ENCODE measurements at regions of chr9 and their contacts with region 1.

Region 1: GRCh38 chr9:6353851-6354686 is 25.9 kb downstream of the TPD52L3 start:
- DNase-seq: peak in 8 of 9 donors; percentile 22 to 69 (median 58)
- ATAC-seq: peak; percentile 92
- H3K4me3 ChIP-seq: no peak overlapping the region
- H3K4me3 Mint-ChIP-seq: no peak overlapping the region
- H3K27ac ChIP-seq: no peak overlapping the region
- H3K27ac Mint-ChIP-seq: no peak overlapping the region
- H3K4me1 ChIP-seq: no peaks in the 10 kb centered on the region
- H3K4me1 Mint-ChIP-seq: peaks cover 0 to 16% (median 0%) of the 10 kb centered on the region in 7 donors
- H3K27me3 ChIP-seq: no peaks in the 10 kb centered on the region
- H3K27me3 Mint-ChIP-seq: peaks cover 5 to 19% (median 9%) of the 10 kb centered on the region in 5 donors

Region 2: GRCh38 chr9:6488395-6488794 is 134.3 kb after region 1 on chr9:
- CTCF ChIA-PET with region 1: no interaction called
- POLR2A ChIA-PET with region 1: no interaction called
- intact Hi-C with region 1: loop called (anchors 2 to 10 kb)
- DNase-seq: peak in 1 of 9 donors; percentile 0
- ATAC-seq: no peak
- H3K4me3 ChIP-seq: no peak overlapping the region
- H3K4me3 Mint-ChIP-seq: no peak overlapping the region
- H3K27ac ChIP-seq: no peak overlapping the region
- H3K27ac Mint-ChIP-seq: no peak overlapping the region
- H3K4me1 ChIP-seq: no peaks in the 10 kb centered on the region
- H3K4me1 Mint-ChIP-seq: peaks cover 0 to 17% (median 6%) of the 10 kb centered on the region in 7 donors
- H3K27me3 ChIP-seq: no peaks in the 10 kb centered on the region
- H3K27me3 Mint-ChIP-seq: no peaks in the 10 kb centered on the region

Region 3: DNA sequence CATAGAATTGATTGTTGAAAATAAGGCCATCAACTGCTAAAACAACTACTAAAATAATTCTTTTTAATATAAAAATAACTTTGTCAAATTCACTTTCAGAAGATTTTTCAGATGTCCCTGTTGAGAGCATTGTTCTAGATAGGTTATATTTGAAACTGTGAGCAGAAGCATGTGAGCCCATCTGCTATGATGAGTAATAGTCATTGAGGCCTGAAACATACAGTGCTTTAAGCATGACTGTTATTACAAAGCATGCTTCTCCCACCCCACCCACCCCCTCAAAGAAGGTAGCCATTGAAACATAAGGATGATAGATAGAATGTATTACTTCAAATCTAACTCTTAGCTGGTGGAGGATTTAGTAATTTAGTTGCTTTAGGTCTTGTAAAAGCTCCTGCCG is 144.9 kb after region 1 on chr9:
- CTCF ChIA-PET with region 1: no interaction called
- POLR2A ChIA-PET with region 1: no interaction called
- intact Hi-C with region 1: loop called in 1 of 2 experiments (anchors 10 kb)
- DNase-seq: no peak
- ATAC-seq: no peak
- H3K4me3 ChIP-seq: no peak overlapping the region
- H3K4me3 Mint-ChIP-seq: no peak overlapping the region
- H3K27ac ChIP-seq: no peak overlapping the region
- H3K27ac Mint-ChIP-seq: peak overlapping the region in 6 of 9 donors; percentile 9 to 72 (median 44)
- H3K4me1 ChIP-seq: no peaks in the 10 kb centered on the region
- H3K4me1 Mint-ChIP-seq: peaks cover 0 to 3% (median 0%) of the 10 kb centered on the region in 7 donors
- H3K27me3 ChIP-seq: no peaks in the 10 kb centered on the region
- H3K27me3 Mint-ChIP-seq: no peaks in the 10 kb centered on the region

Region 4: GRCh38 chr9:6566409-6567139 is 212.5 kb after region 1 on chr9:
- CTCF ChIA-PET with region 1: interaction called, 88 read pairs
- POLR2A ChIA-PET with region 1: no interaction called
- intact Hi-C with region 1: loop called in 1 of 2 experiments (anchors 1 kb)
- DNase-seq: peak in 1 of 9 donors; percentile 57
- ATAC-seq: peak; percentile 69
- H3K4me3 ChIP-seq: no peak overlapping the region
- H3K4me3 Mint-ChIP-seq: peak overlapping the region in 1 of 10 donors; percentile 62
- H3K27ac ChIP-seq: no peak overlapping the region
- H3K27ac Mint-ChIP-seq: peak overlapping the region in 2 of 9 donors; percentile 31 to 72
- H3K4me1 ChIP-seq: no peaks in the 10 kb centered on the region
- H3K4me1 Mint-ChIP-seq: peaks cover 0 to 23% (median 0%) of the 10 kb centered on the region in 7 donors
- H3K27me3 ChIP-seq: no peaks in the 10 kb centered on the region
- H3K27me3 Mint-ChIP-seq: peaks cover 0 to 7% (median 5%) of the 10 kb centered on the region in 5 donors

Region 5: DNA sequence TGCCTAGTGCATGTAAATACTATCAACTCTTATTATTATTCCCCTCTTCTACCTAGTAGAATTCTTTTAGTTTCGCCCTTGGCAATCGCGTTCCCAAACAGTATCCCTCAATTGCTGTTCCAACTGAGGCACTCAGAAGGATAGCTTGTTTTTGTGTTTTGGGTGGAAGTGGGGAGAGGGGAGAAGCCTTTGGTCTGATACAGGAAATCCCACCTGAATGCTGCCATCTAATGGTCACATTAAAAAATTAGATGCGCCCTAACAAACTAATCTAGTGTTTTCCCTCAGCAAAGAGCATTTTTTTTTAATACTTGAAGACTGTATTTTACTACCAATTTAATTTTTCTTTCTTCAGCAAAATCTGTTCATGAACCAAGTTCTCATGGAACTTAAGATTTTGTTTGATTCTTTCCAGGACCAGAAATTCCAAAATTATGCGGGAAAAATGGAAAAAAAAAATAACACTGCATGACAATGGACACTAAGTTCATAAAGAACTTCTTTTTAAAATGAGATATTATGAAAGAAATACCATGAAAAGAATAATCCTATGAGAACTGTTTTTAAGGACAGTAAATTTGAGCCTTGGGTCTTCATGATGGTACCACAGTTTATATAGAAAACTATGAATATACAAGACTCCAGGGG is 313.7 kb after region 1 on chr9:
- CTCF ChIA-PET with region 1: no interaction called
- POLR2A ChIA-PET with region 1: no interaction called
- intact Hi-C with region 1: loop called (anchors 1 kb)
- DNase-seq: peak in 2 of 9 donors; percentile 11 to 14
- ATAC-seq: no peak
- H3K4me3 ChIP-seq: no peak overlapping the region
- H3K4me3 Mint-ChIP-seq: no peak overlapping the region
- H3K27ac ChIP-seq: no peak overlapping the region
- H3K27ac Mint-ChIP-seq: no peak overlapping the region
- H3K4me1 ChIP-seq: no peaks in the 10 kb centered on the region
- H3K4me1 Mint-ChIP-seq: peaks cover 0 to 4% (median 0%) of the 10 kb centered on the region in 7 donors
- H3K27me3 ChIP-seq: no peaks in the 10 kb centered on the region
- H3K27me3 Mint-ChIP-seq: peaks cover 0 to 3% (median 0%) of the 10 kb centered on the region in 5 donors

Region 6: DNA sequence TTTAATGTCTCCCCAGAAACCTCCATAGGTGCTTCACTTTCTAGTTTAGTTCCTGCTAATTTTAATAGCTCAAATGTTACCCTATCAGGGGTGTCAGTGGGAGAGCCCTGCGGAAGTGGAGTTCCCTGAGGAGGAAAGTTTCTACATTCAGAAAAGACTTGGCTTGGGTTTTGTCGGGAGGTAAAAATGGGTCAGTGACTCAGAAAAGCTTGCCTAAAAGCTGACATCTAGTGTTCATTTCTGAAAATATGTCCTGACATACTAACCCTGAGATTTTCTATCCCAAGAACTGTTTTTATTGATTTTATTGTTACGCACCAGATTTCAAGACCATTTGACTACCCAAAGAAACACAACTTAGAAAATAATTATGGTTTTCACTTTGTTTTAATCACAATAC is 332.3 kb after region 1 on chr9:
- CTCF ChIA-PET with region 1: interaction called, 4 read pairs
- POLR2A ChIA-PET with region 1: no interaction called
- intact Hi-C with region 1: loop called in 1 of 2 experiments (anchors 1 kb)
- DNase-seq: peak in 1 of 9 donors; percentile 18
- ATAC-seq: no peak
- H3K4me3 ChIP-seq: no peak overlapping the region
- H3K4me3 Mint-ChIP-seq: no peak overlapping the region
- H3K27ac ChIP-seq: no peak overlapping the region
- H3K27ac Mint-ChIP-seq: peak overlapping the region in 1 of 9 donors; percentile 77
- H3K4me1 ChIP-seq: no peaks in the 10 kb centered on the region
- H3K4me1 Mint-ChIP-seq: peaks cover 0 to 23% (median 16%) of the 10 kb centered on the region in 7 donors
- H3K27me3 ChIP-seq: no peaks in the 10 kb centered on the region
- H3K27me3 Mint-ChIP-seq: no peaks in the 10 kb centered on the region

Region 7: DNA sequence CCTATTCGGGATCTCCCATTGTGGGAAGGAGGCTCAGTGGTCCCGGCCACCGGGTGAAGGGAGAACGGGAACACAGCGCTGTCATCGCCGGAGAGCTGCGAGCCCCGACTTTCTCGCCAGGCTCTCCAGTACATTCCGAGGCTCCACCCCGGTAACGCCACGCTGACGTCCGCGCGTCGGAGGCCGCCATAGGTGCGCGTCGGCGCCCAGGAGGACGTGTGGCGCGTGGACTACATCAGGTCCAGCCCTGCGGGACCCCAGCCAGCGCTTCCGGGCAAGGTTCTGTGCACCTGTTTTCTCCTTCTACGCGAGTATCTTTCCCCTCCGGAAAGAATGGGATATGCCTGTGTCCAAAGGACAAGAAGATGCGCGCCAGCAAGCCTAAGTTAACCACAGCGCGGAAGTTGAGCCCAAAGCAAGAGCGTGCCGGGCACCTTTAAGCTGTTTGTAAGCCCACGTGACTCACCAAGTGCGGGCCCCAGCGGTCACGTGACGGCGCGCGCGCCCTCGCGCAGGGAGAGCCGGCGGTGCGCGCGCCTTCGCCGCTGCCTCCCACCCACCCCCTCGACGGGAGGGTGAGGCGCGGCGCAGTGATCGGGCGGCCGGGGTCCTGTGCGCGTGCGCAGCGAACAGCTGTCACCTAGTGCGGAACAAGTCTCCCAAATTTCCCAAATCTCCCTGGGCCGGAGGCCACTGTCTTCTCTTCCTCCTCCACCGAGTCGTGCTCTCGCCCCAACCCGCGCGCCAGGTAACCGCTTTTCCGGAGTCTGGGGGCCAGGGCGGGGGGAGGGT is 403.6 kb after region 1 on chr9 and contains the start of gene KDM4C:
- CTCF ChIA-PET with region 1: no interaction called
- POLR2A ChIA-PET with region 1: no interaction called
- intact Hi-C with region 1: no loop called
- DNase-seq: peak; percentile 92 to 97 (median 94)
- ATAC-seq: peak; percentile 87
- H3K4me3 ChIP-seq: peak within 1 kb of the TSS; percentile 71
- H3K4me3 Mint-ChIP-seq: peak within 1 kb of the TSS; percentile 89 to 99 (median 96)
- H3K27ac ChIP-seq: peak within 1 kb of the TSS; percentile 98
- H3K27ac Mint-ChIP-seq: peak within 1 kb of the TSS; percentile 98 to 100 (median 100)
- H3K4me1 ChIP-seq: peaks cover 9 to 12% of the 10 kb centered on the region in 2 donors
- H3K4me1 Mint-ChIP-seq: peaks cover 12 to 41% (median 26%) of the 10 kb centered on the region in 7 donors
- H3K27me3 ChIP-seq: no peaks in the 10 kb centered on the region
- H3K27me3 Mint-ChIP-seq: no peaks in the 10 kb centered on the region
- total RNA-seq, gene KDM4C: 68.6 to 100 (median 93.3) TPM

Measured in naive thymus-derived CD4-positive, alpha-beta T cell (primary cell).